Activated CD4-positive, alpha-beta memory T cell treated with anti-CD3 and anti-CD28 coated beads, Interleukin-2, amount 10 ng/mL, durations not matched to agents 7 days and 5 days (primary cell): ENCODE measurements at regions of chr13 and their contacts with region 1.

Region 1: DNA sequence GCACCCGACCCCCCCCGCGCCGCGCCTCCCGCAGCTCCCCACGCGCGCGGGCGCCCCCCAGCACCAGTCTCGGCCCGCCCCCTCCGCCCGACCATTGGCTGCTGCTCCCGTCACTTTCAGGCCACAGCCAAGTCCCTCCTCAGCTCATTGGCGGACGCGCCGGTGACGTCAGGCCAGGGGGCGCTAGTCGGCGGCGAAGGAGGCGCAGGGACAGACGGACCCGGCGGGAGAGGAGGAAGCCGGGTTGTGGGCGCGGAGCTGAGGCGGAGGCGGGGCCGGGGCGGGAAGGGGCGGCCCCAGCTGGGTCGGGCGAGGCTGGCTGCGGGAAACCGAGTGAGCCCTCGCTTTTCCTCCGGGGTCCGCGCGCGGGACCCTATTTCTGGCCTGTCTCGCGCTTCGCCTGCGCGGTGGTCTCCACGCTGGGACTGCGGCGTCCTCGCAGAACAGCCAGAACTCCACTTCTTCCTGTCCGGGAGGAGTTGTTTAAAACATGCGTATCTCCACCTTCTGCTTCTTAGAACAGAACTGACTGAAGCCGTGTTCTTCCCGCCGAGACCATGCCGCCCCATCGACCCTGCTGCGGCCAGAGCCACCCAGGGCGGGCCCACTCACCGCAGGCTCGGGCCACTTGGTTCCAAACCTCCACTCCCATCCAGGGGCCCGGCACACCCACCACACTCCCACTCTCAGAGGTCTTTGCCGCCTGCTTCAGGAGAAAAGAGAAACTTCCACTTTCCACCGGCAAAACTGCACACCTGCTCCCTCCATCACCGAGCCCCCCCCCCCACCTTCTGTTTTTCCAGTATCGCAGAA is 459 bp upstream of the TMTC4 start:
- DNase-seq: peak; percentile 100
- H3K4me3 Mint-ChIP-seq: peak overlapping the region; percentile 80
- H3K27ac Mint-ChIP-seq: peak overlapping the region; percentile 76
- H3K4me1 Mint-ChIP-seq: peaks cover 31% of the 10 kb centered on the region
- H3K27me3 Mint-ChIP-seq: peaks cover 14% of the 10 kb centered on the region

Region 2: DNA sequence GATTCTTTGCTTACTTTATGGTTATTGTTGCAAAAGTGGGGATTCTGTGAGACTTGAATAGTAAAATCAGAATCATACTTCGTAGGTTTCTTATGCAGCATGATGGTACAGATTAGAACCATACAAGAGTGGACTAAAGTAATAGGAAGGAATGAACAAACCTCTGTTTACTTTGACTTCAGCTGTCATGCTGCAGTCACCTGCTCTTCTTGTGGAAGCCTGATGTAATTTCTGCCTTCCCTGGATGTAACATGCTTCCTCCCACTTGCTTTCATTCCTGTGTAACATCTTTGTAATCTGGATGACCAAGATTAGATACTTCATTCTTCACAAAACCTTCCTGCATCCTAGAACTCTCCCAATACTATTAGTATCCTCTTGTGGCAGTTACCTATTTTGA is 351.1 kb before region 1 on chr13:
- CTCF ChIA-PET with region 1: no interaction called
- POLR2A ChIA-PET with region 1: no interaction called
- DNase-seq: no peak
- H3K4me3 Mint-ChIP-seq: no peak overlapping the region
- H3K27ac Mint-ChIP-seq: no peak overlapping the region
- H3K4me1 Mint-ChIP-seq: no peaks in the 10 kb centered on the region
- H3K27me3 Mint-ChIP-seq: no peaks in the 10 kb centered on the region

Region 3: GRCh38 chr13:100440751-100441425 is 234.2 kb before region 1 on chr13:
- CTCF ChIA-PET with region 1: no interaction called
- POLR2A ChIA-PET with region 1: no interaction called
- DNase-seq: no peak
- H3K4me3 Mint-ChIP-seq: no peak overlapping the region
- H3K27ac Mint-ChIP-seq: no peak overlapping the region
- H3K4me1 Mint-ChIP-seq: peaks cover 3% of the 10 kb centered on the region
- H3K27me3 Mint-ChIP-seq: no peaks in the 10 kb centered on the region

Region 4: GRCh38 chr13:100588331-100589177 is 86.5 kb before region 1 on chr13 and contains the start of gene GGACT:
- CTCF ChIA-PET with region 1: interaction called, 10 read pairs
- POLR2A ChIA-PET with region 1: interaction called, 27 read pairs
- DNase-seq: peak; percentile 85
- H3K4me3 Mint-ChIP-seq: peak within 1 kb of the TSS; percentile 71
- H3K27ac Mint-ChIP-seq: peak within 1 kb of the TSS; percentile 86
- H3K4me1 Mint-ChIP-seq: peaks cover 44% of the 10 kb centered on the region
- H3K27me3 Mint-ChIP-seq: no peaks in the 10 kb centered on the region
- total RNA-seq, gene GGACT: 9.5 to 11.4 TPM

Region 5: GRCh38 chr13:100658363-100658762 is 16.7 kb before region 1 on chr13:
- CTCF ChIA-PET with region 1: interaction called, 6 read pairs
- POLR2A ChIA-PET with region 1: interaction called, 18 read pairs
- DNase-seq: peak; percentile 41
- H3K4me3 Mint-ChIP-seq: no peak overlapping the region
- H3K27ac Mint-ChIP-seq: peak overlapping the region; percentile 31
- H3K4me1 Mint-ChIP-seq: peaks cover 28% of the 10 kb centered on the region
- H3K27me3 Mint-ChIP-seq: no peaks in the 10 kb centered on the region